Ascending aorta (tissue), 2 donors: ENCODE measurements at regions of chr18 and their contacts with region 1.

Region 1: GRCh38 chr18:66046032-66046602 is 295.3 kb downstream of the CDH7 start:
- DNase-seq: no peak
- H3K4me3 ChIP-seq: no peak overlapping the region
- H3K27ac ChIP-seq: no peak overlapping the region
- H3K4me1 ChIP-seq: no peaks in the 10 kb centered on the region
- H3K27me3 ChIP-seq: no peaks in the 10 kb centered on the region
- CTCF ChIP-seq: no peak

Region 2: GRCh38 chr18:65924904-65925303 is 121.2 kb before region 1 on chr18:
- intact Hi-C with region 1: no loop called
- DNase-seq: no peak
- H3K4me3 ChIP-seq: no peak overlapping the region
- H3K27ac ChIP-seq: no peak overlapping the region
- H3K4me1 ChIP-seq: no peaks in the 10 kb centered on the region
- H3K27me3 ChIP-seq: no peaks in the 10 kb centered on the region
- CTCF ChIP-seq: no peak

Region 3: GRCh38 chr18:66083078-66083477 is 37.0 kb after region 1 on chr18:
- intact Hi-C with region 1: loop called (anchors 5 kb)
- DNase-seq: no peak
- H3K4me3 ChIP-seq: no peak overlapping the region
- H3K27ac ChIP-seq: no peak overlapping the region
- H3K4me1 ChIP-seq: no peaks in the 10 kb centered on the region
- H3K27me3 ChIP-seq: no peaks in the 10 kb centered on the region
- CTCF ChIP-seq: no peak